GM12878 (cell line): ENCODE measurements at regions of chr19 and their contacts with region 1.

Region 1: DNA sequence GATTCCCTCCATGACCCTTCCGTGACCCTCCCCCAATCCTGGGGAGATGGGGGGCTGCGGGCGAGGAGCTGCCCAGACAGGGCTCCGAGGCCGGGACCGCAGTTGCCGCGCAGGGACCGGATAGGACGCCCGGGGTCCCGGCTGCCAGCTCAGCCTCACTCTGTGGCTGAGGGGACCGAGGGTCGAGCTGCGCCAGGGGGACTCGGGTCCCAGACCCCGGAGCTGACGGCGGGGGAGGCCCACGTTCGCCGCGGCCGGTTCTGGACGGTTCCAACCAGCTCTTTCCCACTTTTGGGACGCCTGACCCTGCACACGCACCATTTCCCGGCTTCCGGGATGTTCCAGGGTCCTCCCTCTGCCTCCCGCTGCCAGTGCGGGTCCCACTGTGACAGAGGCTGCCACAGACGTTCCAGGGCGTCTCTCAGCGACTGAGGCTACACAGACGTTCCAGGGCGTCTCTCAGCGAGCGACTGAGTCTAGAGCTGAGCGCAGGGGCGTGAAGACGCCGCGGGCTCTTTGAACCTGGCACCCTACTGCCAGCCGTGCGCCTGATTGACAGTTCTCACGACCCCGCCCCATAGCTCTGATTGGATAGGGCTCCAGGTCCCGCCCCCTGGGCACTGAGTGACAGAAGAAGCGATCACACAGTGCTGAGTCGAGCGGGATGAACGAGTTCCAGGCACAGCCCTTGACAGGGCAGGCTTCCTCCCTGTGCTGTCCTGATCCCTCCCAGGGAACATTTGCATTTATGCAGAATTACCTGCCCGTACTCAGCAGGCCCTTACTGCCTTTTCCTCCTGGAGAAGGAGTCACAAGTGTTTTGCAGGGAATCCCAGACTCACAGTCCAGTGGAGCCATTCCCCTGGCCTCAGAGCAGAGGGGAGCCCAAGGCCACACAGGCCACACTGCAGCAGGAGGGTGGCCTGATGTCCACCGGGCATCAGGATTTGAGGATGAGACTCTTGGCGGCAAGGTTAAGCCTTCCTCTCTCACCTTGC is at the start of gene ZNF563:
- DNase-seq: peak; percentile 93
- ATAC-seq: peak; percentile 93
- H3K4me3 ChIP-seq: peak within 1 kb of the TSS; percentile 89
- H3K27ac ChIP-seq: peak within 1 kb of the TSS; percentile 72
- H3K4me1 ChIP-seq: peaks cover 10% of the 10 kb centered on the region
- H3K27me3 ChIP-seq: no peaks in the 10 kb centered on the region
- CTCF ChIP-seq: no peak
- EP300 ChIP-seq: no peak
- POLR2A ChIP-seq: peak; percentile 98
- RAD21 ChIP-seq: no peak
- polyA plus RNA-seq, gene ZNF563: 1.7 to 2.5 TPM

Region 2: GRCh38 chr19:12162882-12163806 is 170.3 kb before region 1 on chr19 and contains the start of gene ZNF136:
- CTCF ChIA-PET with region 1: interaction called, 4 read pairs
- POLR2A ChIA-PET with region 1: interaction called, 4 read pairs
- RAD21 ChIA-PET with region 1: interaction called, 11 read pairs
- SMC1A ChIA-PET with region 1: interaction called, 3 read pairs
- in situ Hi-C with region 1: no loop called
- intact Hi-C with region 1: loop called (anchors 5 kb)
- DNase-seq: peak; percentile 80
- ATAC-seq: peak; percentile 100
- H3K4me3 ChIP-seq: peak within 1 kb of the TSS; percentile 95
- H3K27ac ChIP-seq: peak within 1 kb of the TSS; percentile 84
- H3K4me1 ChIP-seq: no peaks in the 10 kb centered on the region
- H3K27me3 ChIP-seq: no peaks in the 10 kb centered on the region
- CTCF ChIP-seq: no peak
- EP300 ChIP-seq: no peak
- POLR2A ChIP-seq: peak; percentile 94
- RAD21 ChIP-seq: no peak
- polyA plus RNA-seq, gene ZNF136: 2.8 to 3.1 TPM

Region 3: GRCh38 chr19:12194827-12195731 is 138.4 kb before region 1 on chr19:
- CTCF ChIA-PET with region 1: no interaction called
- POLR2A ChIA-PET with region 1: no interaction called
- RAD21 ChIA-PET with region 1: no interaction called
- SMC1A ChIA-PET with region 1: no interaction called
- in situ Hi-C with region 1: no loop called
- intact Hi-C with region 1: no loop called
- DNase-seq: no peak
- ATAC-seq: no peak
- H3K4me3 ChIP-seq: no peak overlapping the region
- H3K27ac ChIP-seq: no peak overlapping the region
- H3K4me1 ChIP-seq: no peaks in the 10 kb centered on the region
- H3K27me3 ChIP-seq: no peaks in the 10 kb centered on the region
- CTCF ChIP-seq: no peak
- EP300 ChIP-seq: no peak
- POLR2A ChIP-seq: no peak; the same call in 1 of the 2 replicates
- RAD21 ChIP-seq: no peak

Region 4: DNA sequence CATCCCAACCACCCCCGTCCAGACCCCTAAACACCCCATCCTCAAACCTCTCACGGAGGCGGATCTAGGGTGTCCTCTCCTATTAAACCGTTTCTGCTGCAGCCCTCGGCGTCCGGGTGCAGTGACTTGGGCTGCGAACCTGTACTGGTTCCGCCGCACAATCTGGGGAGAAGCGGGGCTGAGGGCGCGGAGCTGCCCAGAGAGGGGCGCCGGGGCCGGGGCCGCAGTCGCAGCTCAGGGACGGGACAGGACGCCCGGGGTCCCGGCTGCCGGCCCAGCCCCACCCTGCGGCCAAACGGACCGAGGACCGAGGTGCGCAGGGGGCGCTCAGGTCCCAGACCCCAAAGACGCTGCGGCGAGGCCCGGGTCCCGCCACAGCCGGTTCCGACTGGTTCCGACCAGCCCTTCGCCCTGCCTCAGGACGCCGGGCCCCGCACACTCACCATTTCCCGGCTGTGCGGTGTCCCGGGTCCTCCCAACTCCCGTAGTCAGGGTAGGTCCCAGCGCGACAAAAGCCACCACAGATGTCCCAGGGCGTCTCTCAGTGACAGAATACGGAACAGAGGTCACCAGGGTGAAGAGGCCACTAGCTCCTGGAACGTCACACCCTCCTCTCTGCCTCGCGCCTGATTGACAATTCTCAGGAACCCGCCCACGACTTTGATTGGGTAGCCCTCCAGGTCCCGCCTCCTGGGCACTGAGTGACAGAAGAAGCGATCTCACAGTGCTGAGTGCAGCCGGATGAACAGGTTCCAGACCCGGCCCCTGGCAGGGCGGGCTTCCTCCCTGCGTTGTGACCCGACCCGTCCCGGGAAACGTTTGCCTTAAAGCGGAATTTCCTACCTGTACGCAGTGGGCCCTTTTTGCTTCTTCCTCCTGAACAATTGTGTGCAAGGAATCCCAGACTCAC is 39.0 kb before region 1 on chr19 and contains the start of gene ZNF44:
- CTCF ChIA-PET with region 1: interaction called, 4 read pairs
- POLR2A ChIA-PET with region 1: interaction called, 8 read pairs
- RAD21 ChIA-PET with region 1: interaction called, 9 read pairs
- SMC1A ChIA-PET with region 1: interaction called, 3 read pairs
- in situ Hi-C with region 1: no loop called
- intact Hi-C with region 1: loop called (anchors 1 kb)
- DNase-seq: peak; percentile 95
- ATAC-seq: peak; percentile 96
- H3K4me3 ChIP-seq: peak within 1 kb of the TSS; percentile 82
- H3K27ac ChIP-seq: peak within 1 kb of the TSS; percentile 88
- H3K4me1 ChIP-seq: 0 out of 2 replicates have a peak, but pooled peaks cover 5% of the 10 kb centered on the region
- H3K27me3 ChIP-seq: no peaks in the 10 kb centered on the region
- CTCF ChIP-seq: no peak
- EP300 ChIP-seq: no peak
- POLR2A ChIP-seq: peak; percentile 92
- RAD21 ChIP-seq: no peak
- polyA plus RNA-seq, gene ZNF44: 4.0 to 4.5 TPM

Region 5: DNA sequence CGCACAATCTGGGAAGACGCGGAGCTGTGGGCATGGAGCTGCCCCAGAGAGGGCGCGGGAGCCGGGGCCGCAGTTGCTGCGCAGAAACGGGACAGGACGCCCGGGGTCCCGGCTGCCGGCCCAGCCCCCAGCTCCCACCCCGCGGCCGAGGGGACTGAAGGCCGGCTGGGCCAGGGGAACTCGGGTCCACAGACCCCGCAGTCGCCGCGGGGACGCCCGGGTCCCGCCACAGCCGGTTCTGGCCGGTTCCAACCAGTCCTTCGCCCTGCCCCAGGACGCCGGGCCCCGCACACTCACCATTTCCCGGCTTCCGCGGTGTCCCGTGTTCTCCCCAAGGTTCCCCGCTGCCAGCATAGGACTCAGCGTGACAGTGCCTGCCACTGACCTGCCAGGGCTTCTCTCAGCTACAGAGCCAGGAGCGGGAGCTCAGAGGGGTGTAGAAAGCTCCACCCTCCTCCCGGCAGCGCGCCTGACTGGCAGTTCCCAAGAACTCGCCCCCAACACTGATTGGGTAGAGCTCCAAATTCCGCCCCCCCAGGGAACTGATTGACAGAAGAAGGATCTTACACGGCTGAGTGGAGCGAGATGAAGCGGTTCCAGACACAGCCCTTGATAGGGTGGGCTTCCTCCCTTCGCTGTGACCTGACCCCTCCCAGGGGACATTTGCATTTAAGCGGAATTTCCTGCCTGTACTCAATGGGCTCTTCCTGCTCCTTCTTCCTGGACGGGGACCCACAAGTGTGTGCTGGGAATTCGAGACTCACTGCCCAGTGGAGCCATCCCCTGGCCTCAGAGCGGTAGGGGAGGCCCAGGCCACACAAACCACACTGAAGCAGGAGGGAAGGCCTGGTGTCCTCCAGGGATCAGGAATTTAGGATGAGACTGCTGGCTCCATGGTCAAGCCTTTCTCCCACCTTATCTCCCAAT is 32.0 kb after region 1 on chr19 and contains the start of gene ZNF442:
- CTCF ChIA-PET with region 1: interaction called, 4 read pairs
- POLR2A ChIA-PET with region 1: interaction called, 5 read pairs
- RAD21 ChIA-PET with region 1: interaction called, 22 read pairs
- SMC1A ChIA-PET with region 1: interaction called, 11 read pairs
- in situ Hi-C with region 1: no loop called
- intact Hi-C with region 1: no loop called
- DNase-seq: peak; percentile 63
- ATAC-seq: peak; percentile 90
- H3K4me3 ChIP-seq: peak within 1 kb of the TSS; percentile 74
- H3K27ac ChIP-seq: peak within 1 kb of the TSS; percentile 55
- H3K4me1 ChIP-seq: no peaks in the 10 kb centered on the region; the same call in 1 of the 2 replicates
- H3K27me3 ChIP-seq: no peaks in the 10 kb centered on the region
- CTCF ChIP-seq: peak in 2 of 3 experiments; percentile 23 to 27; a peak in 2 of 6 replicates
- EP300 ChIP-seq: no peak
- POLR2A ChIP-seq: peak; percentile 96
- RAD21 ChIP-seq: peak; percentile 31; the same call in 1 of the 2 replicates
- polyA plus RNA-seq, gene ZNF442: 0.05 TPM in 1 of 2 experiments, not detected in the other